Activated CD4-positive, alpha-beta memory T cell treated with anti-CD3 and anti-CD28 coated beads, Interleukin-2, amount 10 ng/mL, durations not matched to agents 7 days and 5 days (primary cell): ENCODE measurements at regions of chr15 and their contacts with region 1.

Region 1: GRCh38 chr15:98177924-98178592 is 217.6 kb downstream of the ARRDC4 start:
- DNase-seq: peak; percentile 26
- H3K4me3 Mint-ChIP-seq: no peak overlapping the region
- H3K27ac Mint-ChIP-seq: no peak overlapping the region
- H3K4me1 Mint-ChIP-seq: no peaks in the 10 kb centered on the region
- H3K27me3 Mint-ChIP-seq: peaks cover 8% of the 10 kb centered on the region

Region 2: GRCh38 chr15:97903971-97904572 is 274.0 kb before region 1 on chr15:
- CTCF ChIA-PET with region 1: interaction called, 20 read pairs
- POLR2A ChIA-PET with region 1: no interaction called
- DNase-seq: no peak
- H3K4me3 Mint-ChIP-seq: no peak overlapping the region
- H3K27ac Mint-ChIP-seq: no peak overlapping the region
- H3K4me1 Mint-ChIP-seq: no peaks in the 10 kb centered on the region
- H3K27me3 Mint-ChIP-seq: no peaks in the 10 kb centered on the region

Region 3: DNA sequence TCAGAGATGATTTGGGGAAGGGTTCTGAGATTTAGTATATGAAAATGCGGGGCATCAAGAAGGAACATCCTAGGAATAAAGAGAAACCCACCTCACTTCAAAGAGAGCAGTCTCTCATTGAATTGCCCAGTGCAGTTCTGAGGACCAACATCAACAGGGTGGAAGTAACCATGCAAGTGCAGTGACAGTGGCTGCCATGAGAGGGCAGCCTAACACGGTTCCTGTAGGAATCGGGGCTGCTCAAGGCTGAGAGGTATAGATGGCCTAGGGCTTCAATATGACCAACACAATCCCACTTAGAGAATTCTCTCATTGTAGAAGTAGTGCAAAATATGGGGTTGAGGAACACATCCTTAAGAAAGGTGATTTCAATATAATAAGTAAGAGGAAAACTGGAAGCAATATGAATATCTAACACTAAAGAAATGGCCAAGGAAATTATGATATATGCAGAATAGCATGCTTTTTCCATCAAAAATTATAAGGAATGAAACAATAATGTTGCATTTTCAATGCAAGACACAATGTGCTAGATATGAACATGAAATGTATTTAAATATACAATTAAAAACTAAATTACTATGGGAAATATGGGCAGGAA is 268.7 kb before region 1 on chr15:
- CTCF ChIA-PET with region 1: interaction called, 20 read pairs
- POLR2A ChIA-PET with region 1: no interaction called
- DNase-seq: peak; percentile 34
- H3K4me3 Mint-ChIP-seq: no peak overlapping the region
- H3K27ac Mint-ChIP-seq: no peak overlapping the region
- H3K4me1 Mint-ChIP-seq: no peaks in the 10 kb centered on the region
- H3K27me3 Mint-ChIP-seq: no peaks in the 10 kb centered on the region

Region 4: GRCh38 chr15:98231696-98232440 is 53.8 kb after region 1 on chr15:
- CTCF ChIA-PET with region 1: no interaction called
- POLR2A ChIA-PET with region 1: no interaction called
- DNase-seq: no peak
- H3K4me3 Mint-ChIP-seq: no peak overlapping the region
- H3K27ac Mint-ChIP-seq: no peak overlapping the region
- H3K4me1 Mint-ChIP-seq: no peaks in the 10 kb centered on the region
- H3K27me3 Mint-ChIP-seq: no peaks in the 10 kb centered on the region